CD4-positive, alpha-beta T cell (primary cell): ENCODE measurements at regions of chr10 and their contacts with region 1.

Region 1: DNA sequence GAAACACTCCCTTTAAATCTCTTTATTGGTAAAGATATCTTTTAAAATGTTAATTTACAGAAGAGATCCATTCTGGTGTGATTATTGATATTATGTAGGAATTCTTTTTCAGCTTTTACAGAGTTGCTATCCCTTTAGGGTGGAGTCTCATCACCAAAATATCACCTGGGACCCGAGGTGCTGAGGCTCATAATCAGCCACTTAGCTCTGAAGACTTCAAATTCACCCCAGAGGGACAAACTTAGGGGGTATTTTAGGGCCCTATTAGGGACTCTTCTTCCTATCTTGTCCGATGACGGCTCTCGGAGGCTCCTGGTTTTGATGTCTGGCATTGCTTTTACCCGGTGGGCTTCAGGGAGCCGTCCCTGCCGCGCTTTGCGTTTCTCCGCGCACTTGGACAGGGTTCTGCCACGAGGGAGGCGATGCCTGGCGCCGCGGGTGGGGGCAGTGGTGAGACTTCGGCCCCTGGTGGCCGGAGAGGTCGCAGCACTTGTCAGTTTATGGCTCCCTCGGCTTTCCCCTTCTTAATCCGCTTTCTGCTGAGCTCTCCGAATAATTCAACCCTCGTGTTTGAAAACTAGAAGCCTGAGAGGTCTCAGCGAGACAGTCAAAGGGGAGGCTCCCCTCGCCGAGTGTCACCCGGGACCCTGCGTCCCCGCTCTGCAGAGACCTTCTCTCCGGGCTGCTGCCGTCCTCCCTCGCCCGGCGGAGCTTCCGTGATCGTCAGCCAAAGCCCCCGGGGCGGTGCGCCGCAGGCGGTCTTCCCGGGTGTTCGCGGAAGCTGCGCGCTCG is 27.8 kb downstream of the RBM20 start:
- DNase-seq: peak; percentile 25 to 85 (median 58)
- ATAC-seq: peak; percentile 92
- H3K4me3 ChIP-seq: peak overlapping the region; percentile 61
- H3K4me3 Mint-ChIP-seq: peak overlapping the region; percentile 92
- H3K27ac ChIP-seq: peak overlapping the region in 1 of 2 donors; percentile 16
- H3K27ac Mint-ChIP-seq: peak overlapping the region; percentile 69
- H3K4me1 ChIP-seq: peaks cover 10% of the 10 kb centered on the region
- H3K4me1 Mint-ChIP-seq: peaks cover 6% of the 10 kb centered on the region
- H3K27me3 ChIP-seq: no peaks in the 10 kb centered on the region
- H3K27me3 Mint-ChIP-seq: no peaks in the 10 kb centered on the region
- CTCF ChIP-seq: peak; percentile 92

Region 2: DNA sequence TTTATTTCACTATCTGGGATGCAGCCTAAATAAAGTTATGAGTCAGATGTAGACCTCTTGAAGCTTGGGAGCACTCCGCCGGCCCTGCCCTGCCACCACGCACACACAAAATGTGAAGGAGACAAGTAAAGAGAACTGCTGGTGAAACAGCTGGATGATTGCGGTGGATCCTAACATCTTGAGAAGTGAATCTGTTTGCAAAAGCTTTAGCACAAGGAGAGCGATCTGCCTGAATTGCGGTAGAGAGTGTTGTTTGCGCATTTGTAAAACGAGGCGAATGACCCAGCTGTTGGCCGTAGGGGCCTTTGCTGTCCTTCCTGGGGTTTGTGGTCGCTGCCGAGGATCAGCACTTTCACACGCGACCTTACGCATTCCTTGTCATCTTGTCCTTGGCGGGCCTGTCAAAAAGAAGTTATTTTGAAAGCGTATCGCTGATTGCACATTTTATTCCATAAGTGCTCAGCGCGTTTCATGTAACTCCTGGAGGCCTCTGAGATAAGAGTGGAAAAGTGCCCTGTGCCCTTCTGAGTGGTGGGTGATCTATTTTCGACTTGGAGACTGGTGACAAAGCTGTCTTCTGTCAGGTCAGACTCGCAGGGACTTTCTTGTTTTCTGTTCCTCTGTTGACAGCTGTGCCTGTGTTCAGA is 12.9 kb after region 1 on chr10:
- CTCF ChIA-PET with region 1: interaction called, 13 read pairs
- POLR2A ChIA-PET with region 1: interaction called, 3 read pairs
- intact Hi-C with region 1: no loop called
- DNase-seq: no peak
- ATAC-seq: no peak
- H3K4me3 ChIP-seq: no peak overlapping the region
- H3K4me3 Mint-ChIP-seq: no peak overlapping the region
- H3K27ac ChIP-seq: no peak overlapping the region
- H3K27ac Mint-ChIP-seq: no peak overlapping the region
- H3K4me1 ChIP-seq: no peaks in the 10 kb centered on the region
- H3K4me1 Mint-ChIP-seq: no peaks in the 10 kb centered on the region
- H3K27me3 ChIP-seq: no peaks in the 10 kb centered on the region
- H3K27me3 Mint-ChIP-seq: peaks cover 4% of the 10 kb centered on the region
- CTCF ChIP-seq: no peak